ENCODE measurements at regions of chr1 and their contacts with region 1.

Region 1: GRCh38 chr1:20223551-20224419 is 37.5 kb upstream of the PLA2G2C start:
- DNase-seq: peak; percentile 39
- ATAC-seq: peak; percentile 88
- H3K4me3 Mint-ChIP-seq: no peak overlapping the region
- H3K27ac Mint-ChIP-seq: no peak overlapping the region
- H3K4me1 Mint-ChIP-seq: peaks cover 22% of the 10 kb centered on the region
- H3K27me3 Mint-ChIP-seq: peaks cover 43% of the 10 kb centered on the region
- CTCF ChIP-seq: no peak

Region 2: DNA sequence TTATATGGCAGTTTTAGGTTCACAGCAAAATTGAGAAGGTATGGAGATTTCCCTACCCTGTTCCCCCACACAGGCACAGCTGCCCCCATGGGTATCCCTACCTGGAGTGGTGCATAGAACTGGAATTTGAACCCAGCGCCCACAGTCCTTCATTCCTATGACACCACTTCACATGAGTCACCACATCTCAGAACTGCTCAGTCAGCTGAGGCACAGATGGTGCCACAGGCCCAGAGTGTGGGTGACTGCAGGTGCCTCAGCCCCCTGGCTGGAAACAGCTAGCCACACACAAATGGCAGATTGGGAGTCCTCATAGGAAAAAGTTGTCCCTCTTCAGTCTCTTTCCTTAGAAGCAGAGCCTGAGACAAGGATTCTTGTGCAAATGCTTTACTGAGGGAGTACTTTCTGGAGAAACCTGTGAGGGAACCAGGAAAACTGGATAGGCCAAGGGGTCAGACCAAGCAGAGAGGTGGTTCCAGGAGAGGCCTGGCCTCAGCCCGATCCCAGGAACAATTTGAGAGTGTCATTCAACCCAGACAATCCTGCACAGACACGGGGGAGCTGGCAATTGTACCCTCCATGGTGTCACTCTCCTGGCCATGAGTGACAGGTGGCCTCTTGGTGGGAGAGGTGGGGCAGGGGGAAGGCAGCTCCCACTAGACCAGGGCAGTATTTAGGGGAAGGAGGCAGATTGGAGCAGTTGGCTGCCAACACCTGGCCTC is 111.3 kb before region 1 on chr1:
- CTCF ChIA-PET with region 1: no interaction called
- POLR2A ChIA-PET with region 1: no interaction called
- DNase-seq: no peak
- ATAC-seq: no peak
- H3K4me3 Mint-ChIP-seq: no peak overlapping the region
- H3K27ac Mint-ChIP-seq: no peak overlapping the region
- H3K4me1 Mint-ChIP-seq: peaks cover 25% of the 10 kb centered on the region
- H3K27me3 Mint-ChIP-seq: no peaks in the 10 kb centered on the region; the same call in 1 of the 2 replicates
- CTCF ChIP-seq: no peak

Region 3: GRCh38 chr1:20290624-20291597 is 67.1 kb after region 1 on chr1 and contains the start of gene VWA5B1:
- CTCF ChIA-PET with region 1: interaction called, 10 read pairs
- POLR2A ChIA-PET with region 1: interaction called, 6 read pairs
- DNase-seq: peak; percentile 76
- ATAC-seq: peak; percentile 87
- H3K4me3 Mint-ChIP-seq: peak within 1 kb of the TSS; percentile 60
- H3K27ac Mint-ChIP-seq: no peak within 1 kb of the TSS
- H3K4me1 Mint-ChIP-seq: peaks cover 26% of the 10 kb centered on the region
- H3K27me3 Mint-ChIP-seq: peaks cover 32% of the 10 kb centered on the region
- CTCF ChIP-seq: no peak
- total RNA-seq, gene VWA5B1: 1.1 to 1.5 TPM (median 1.4 TPM) in 3 replicates